HEK293 (cell line): ENCODE measurements at regions of chr7 and their contacts with region 1.

Region 1: DNA sequence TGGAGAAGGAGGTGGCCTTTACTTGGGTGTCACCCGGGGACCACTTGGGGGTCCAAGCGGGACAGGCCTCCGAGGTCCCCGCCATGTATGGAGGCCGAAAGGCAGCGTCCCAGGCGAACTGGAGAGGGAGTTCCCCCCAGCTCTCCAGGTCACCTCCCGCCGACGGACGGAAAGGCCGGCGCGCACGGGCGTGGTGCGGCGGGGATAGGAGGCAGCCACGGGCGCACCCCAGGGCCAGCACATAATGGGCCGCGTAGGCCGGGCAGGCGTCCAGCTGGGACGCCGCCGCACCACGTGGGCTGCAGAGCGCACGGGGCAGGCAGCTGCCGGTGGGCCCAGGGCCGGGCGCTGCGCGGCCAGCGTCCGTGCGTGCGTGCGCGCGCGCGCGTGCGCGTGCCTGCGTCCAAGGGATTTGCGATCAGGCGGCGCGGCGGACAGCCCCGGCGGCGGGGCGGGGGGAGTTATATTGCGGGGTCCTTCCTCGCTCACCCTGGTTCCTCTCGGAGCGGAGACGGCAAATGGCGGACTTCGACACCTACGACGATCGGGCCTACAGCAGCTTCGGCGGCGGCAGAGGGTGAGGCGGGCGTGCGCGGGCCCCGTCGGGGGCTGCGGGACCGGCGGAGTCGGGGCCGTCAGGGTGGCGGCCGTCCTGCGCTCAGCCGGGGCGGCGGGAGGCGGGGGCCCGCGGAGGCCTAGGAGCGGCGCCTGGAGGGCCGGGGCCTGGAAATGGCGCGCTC is at the start of gene EIF4H:
- H3K4me3 ChIP-seq: peak within 1 kb of the TSS; percentile 86
- H3K27ac ChIP-seq: peak within 1 kb of the TSS; percentile 87
- H3K4me1 ChIP-seq: peaks cover 11% of the 10 kb centered on the region; the same call in 1 of the 2 replicates
- CTCF ChIP-seq: 0 out of 2 replicates have a peak, but pooled peaks have one; percentile 11

Region 2: GRCh38 chr7:74141705-74142104 is 32.3 kb before region 1 on chr7:
- CTCF ChIA-PET with region 1: no interaction called
- POLR2A ChIA-PET with region 1: no interaction called
- H3K4me3 ChIP-seq: no peak overlapping the region
- H3K27ac ChIP-seq: no peak overlapping the region
- H3K4me1 ChIP-seq: no peaks in the 10 kb centered on the region
- CTCF ChIP-seq: no peak

Region 3: DNA sequence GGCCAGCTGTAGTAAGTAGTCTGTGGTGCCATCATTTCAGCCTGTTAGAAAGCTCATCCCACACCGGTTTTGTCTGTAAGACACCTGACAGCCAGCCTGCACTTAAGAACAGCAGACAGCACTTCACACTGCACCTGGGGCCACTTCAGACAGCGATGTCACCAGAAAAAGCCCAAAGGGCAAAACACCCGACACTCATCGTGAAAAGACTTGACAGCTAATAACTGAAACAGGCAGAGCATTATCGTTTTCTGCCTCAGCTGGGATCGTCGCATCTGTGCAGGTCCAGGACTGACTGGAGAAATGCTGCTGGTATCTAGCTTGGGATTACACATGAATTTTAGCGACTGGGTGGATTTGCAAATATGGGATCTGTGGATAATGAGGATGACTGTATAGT is 19.0 kb after region 1 on chr7:
- CTCF ChIA-PET with region 1: interaction called, 17 read pairs
- POLR2A ChIA-PET with region 1: interaction called, 7 read pairs
- H3K4me3 ChIP-seq: no peak overlapping the region
- H3K27ac ChIP-seq: no peak overlapping the region
- H3K4me1 ChIP-seq: no peaks in the 10 kb centered on the region
- CTCF ChIP-seq: no peak

Region 4: DNA sequence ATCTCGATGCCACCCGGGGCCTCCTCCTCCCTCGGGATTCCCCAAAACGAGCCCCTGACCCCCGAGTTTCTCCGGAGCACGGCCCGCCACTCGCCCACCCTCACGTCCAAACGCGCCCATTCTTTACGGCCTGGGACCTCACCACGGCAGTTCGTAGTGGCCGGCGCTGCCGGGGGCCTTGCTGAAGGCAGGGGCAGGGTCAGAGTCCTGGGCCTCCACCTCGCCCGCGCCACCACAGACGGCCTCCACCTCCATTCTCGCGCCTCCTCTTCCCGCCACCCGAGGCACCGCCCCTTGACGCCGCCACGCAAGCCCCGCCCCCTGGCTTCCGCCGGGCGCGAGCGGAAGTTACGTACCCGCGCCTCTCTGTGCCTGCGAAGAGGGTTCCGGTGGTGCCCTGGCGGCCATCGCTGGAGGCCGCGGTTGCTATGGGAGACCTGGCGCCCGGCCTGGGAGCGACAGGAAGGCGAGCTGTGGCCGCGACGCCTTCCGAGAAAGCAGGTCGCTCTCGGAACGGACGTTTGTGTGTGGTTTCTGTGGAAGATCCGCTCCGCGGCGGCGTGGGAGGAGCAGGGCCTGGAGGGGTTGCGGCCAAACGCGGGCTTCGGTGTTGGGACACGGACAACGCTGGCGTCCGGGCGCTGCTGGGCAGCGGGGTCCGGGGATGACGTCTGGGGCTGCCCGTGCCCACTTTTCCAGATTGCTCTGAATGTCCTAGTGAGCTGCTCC is 80.3 kb after region 1 on chr7 and contains the start of gene RFC2:
- CTCF ChIA-PET with region 1: no interaction called
- POLR2A ChIA-PET with region 1: no interaction called
- H3K4me3 ChIP-seq: peak within 1 kb of the TSS; percentile 93
- H3K27ac ChIP-seq: peak within 1 kb of the TSS; percentile 95
- H3K4me1 ChIP-seq: no peaks in the 10 kb centered on the region
- CTCF ChIP-seq: peak; percentile 44; the same call in 1 of the 2 replicates

Region 5: GRCh38 chr7:74289018-74289658 is 115.1 kb after region 1 on chr7 and contains the start of gene CLIP2:
- CTCF ChIA-PET with region 1: no interaction called
- POLR2A ChIA-PET with region 1: no interaction called
- H3K4me3 ChIP-seq: peak within 1 kb of the TSS; percentile 56
- H3K27ac ChIP-seq: peak within 1 kb of the TSS; percentile 57; the same call in 1 of the 2 replicates
- H3K4me1 ChIP-seq: peaks cover 5% of the 10 kb centered on the region; the same call in 1 of the 2 replicates
- CTCF ChIP-seq: no peak